Ascending aorta (tissue), 2 donors: ENCODE measurements at regions of chr5 and their contacts with region 1.

Region 1: GRCh38 chr5:132437604-132438266 is 52.8 kb downstream of the IRF1 start:
- DNase-seq: peak; percentile 34 to 80
- H3K4me3 ChIP-seq: no peak overlapping the region
- H3K27ac ChIP-seq: peak overlapping the region; percentile 47 to 59
- H3K4me1 ChIP-seq: peaks cover 19 to 36% of the 10 kb centered on the region in 2 donors
- H3K27me3 ChIP-seq: no peaks in the 10 kb centered on the region
- CTCF ChIP-seq: no peak

Region 2: DNA sequence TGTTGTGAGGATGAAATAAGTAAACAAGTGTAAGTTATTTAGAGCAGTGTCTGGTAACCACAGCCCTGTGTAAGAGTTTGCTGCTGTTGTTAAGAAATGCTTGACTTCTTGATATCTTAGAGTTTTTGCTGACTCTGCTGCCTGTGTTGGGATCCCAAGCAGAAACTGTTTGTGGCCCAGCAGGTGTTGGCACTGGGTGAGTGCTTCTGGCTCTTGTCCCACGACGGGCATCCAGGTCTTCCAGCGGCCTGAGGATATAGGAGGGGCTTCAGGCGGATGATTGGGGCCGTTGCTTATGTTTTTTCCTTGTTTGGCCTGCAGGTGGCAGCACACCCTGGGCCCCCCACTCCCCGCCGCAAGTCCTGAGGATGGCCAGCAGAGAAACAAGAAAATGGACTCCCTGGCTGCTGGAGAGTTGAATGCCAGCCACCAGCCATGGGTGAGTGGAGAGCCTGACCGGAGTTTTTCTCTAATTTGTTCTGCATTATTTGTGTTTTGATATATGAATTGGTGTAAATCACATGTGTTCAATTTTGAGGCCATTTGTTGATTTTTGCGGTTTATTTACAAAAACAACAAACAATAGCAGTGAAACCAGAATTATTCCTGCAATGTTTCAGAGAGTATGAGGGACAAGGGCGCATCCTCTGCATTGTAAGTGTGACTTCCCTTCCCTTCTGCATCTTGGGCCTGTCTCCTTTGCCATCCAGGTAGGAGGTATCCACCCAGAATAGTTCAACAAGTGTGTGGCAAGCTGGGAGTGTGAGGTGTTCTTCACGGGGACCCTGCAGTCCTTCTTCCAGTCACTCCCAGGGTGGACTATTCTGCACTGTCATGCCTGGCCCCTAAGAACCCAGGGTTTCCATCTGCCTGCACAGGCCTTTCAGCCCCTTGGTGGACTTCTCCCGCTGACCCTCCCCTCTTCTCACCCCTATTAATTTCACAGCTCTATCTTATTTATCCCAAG is 17.9 kb before region 1 on chr5:
- intact Hi-C with region 1: loop called (anchors 2 kb)
- DNase-seq: peak in 1 of 2 donors; percentile 78
- H3K4me3 ChIP-seq: no peak overlapping the region
- H3K27ac ChIP-seq: peak overlapping the region; percentile 75 to 76
- H3K4me1 ChIP-seq: peaks cover 19 to 68% of the 10 kb centered on the region in 2 donors
- H3K27me3 ChIP-seq: no peaks in the 10 kb centered on the region
- CTCF ChIP-seq: peak; percentile 80 to 82 (median 80)

Region 3: GRCh38 chr5:132629230-132629944 is 191.7 kb after region 1 on chr5:
- intact Hi-C with region 1: no loop called
- DNase-seq: no peak
- H3K4me3 ChIP-seq: no peak overlapping the region
- H3K27ac ChIP-seq: no peak overlapping the region
- H3K4me1 ChIP-seq: no peaks in the 10 kb centered on the region
- H3K27me3 ChIP-seq: no peaks in the 10 kb centered on the region
- CTCF ChIP-seq: no peak